ENCODE measurements at regions of chr7 and their contacts with region 1.

Region 1: DNA sequence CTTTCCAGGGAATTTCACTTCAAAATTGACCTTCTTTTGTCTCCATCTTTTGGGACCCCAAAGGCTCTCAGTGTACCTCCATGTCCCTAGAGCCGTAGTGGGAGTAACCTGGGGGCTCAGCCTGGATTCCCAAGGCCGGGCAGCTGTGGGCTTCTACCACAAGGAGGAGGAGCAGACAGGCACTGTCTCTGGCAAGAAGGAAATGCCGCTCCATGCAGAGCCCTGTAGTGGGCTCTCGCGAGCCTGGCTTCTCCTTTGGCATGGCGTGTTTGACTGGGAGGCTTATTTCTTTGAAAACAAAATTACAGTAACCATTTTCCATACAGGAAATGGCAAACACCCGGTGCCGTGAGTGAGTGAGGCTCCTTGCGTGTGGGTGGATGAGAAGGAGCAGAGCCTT is 76.8 kb upstream of the FAM180A start:
- DNase-seq: no peak
- H3K4me3 ChIP-seq: no peak overlapping the region
- H3K27ac ChIP-seq: no peak overlapping the region
- H3K4me1 ChIP-seq: no peaks in the 10 kb centered on the region
- H3K27me3 ChIP-seq: no peaks in the 10 kb centered on the region
- CTCF ChIP-seq: no peak
- EP300 ChIP-seq: no peak
- POLR2A ChIP-seq: no peak

Region 2: GRCh38 chr7:135349746-135350379 is 475.5 kb before region 1 on chr7:
- in situ Hi-C with region 1: no loop called
- intact Hi-C with region 1: no loop called
- DNase-seq: no peak
- H3K4me3 ChIP-seq: no peak overlapping the region
- H3K27ac ChIP-seq: no peak overlapping the region
- H3K4me1 ChIP-seq: no peaks in the 10 kb centered on the region
- H3K27me3 ChIP-seq: no peaks in the 10 kb centered on the region
- CTCF ChIP-seq: no peak
- EP300 ChIP-seq: no peak
- POLR2A ChIP-seq: no peak

Region 3: DNA sequence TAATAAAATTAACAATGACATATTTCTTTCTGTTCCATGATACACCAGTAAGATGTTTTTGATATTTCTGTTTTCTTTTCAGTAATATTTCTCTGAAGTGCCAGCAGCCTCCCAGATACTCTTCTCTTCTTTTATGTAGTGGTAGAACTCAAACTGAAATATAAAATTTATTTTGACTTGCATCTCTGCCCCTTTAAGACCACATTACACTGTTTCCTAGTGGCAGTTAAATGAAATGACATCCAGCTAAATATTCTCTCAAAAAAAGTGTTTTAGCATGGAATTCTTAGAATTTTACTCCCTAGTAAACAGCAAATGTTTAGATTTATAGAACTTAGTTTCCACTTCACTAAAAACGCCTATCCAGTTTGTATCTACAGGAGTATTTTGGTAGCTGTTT is 388.9 kb after region 1 on chr7:
- in situ Hi-C with region 1: no loop called
- intact Hi-C with region 1: loop called (anchors 5 kb)
- DNase-seq: no peak
- H3K4me3 ChIP-seq: no peak overlapping the region
- H3K27ac ChIP-seq: no peak overlapping the region
- H3K4me1 ChIP-seq: no peaks in the 10 kb centered on the region
- H3K27me3 ChIP-seq: no peaks in the 10 kb centered on the region
- CTCF ChIP-seq: no peak
- EP300 ChIP-seq: no peak
- POLR2A ChIP-seq: no peak